GM12878 (cell line): ENCODE measurements at regions of chr13 and their contacts with region 1.

Region 1: DNA sequence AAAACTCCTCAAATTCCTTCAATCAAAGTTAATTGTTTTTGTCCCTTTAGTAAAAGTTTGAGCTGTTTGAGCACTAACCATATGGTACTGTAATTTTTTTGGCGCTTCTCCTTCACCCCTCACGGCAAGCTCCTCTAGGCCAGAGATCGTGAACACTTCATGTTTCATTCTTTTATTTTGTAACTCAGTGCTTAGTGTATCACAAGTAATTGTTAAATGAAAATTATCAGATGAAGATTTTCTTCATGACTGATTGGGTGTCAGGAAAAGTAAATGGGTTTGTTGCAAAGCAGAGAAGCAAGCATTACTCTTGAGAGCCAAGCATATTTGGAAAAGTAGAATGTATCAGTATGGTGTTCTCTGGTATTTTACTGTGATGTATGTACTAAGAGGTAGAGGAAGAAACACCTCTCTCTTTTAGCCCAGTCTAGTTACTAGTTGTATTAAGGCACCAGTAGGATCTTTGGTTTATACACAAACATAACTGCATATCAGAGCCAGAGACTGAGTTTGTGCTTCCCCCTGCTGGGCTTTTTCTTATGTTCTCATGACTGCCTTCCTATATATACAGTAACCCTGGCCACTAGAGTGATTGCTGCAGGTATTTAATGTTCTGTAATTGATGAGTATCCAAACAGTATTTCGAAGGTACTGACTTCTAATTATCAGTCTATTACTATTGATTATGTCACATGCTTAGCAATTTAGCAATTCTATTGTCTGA is 202.3 kb upstream of the KLHL1 start:
- DNase-seq: no peak
- ATAC-seq: peak; percentile 90
- H3K4me3 ChIP-seq: no peak overlapping the region
- H3K27ac ChIP-seq: no peak overlapping the region
- H3K4me1 ChIP-seq: no peaks in the 10 kb centered on the region
- H3K27me3 ChIP-seq: no peaks in the 10 kb centered on the region
- CTCF ChIP-seq: peak in 2 of 3 experiments; percentile 28 to 48; a peak in 3 of 6 replicates
- EP300 ChIP-seq: no peak
- POLR2A ChIP-seq: no peak
- RAD21 ChIP-seq: peak; percentile 50

Region 2: DNA sequence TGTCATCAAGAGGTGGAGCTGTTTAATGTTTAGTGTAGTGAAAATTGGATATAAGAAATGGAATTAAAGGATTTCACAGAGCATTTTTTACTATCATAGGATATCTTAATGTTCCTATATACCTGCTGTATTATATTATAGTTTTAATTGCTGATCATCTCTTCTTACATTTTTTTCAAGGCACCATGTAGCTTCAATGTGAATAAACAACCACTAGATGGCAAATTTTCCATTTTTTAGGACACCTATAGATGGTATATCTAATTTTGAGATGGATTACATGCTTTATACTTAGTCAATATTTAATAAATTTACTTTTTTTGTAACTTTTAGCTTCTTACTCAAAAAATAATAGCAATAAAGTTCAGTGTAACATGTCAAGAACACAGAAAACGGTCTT is 211.9 kb before region 1 on chr13:
- CTCF ChIA-PET with region 1: interaction called, 28 read pairs
- POLR2A ChIA-PET with region 1: no interaction called
- RAD21 ChIA-PET with region 1: interaction called, 9 read pairs
- SMC1A ChIA-PET with region 1: interaction called, 13 read pairs
- in situ Hi-C with region 1: no loop called
- intact Hi-C with region 1: loop called (anchors 5 kb)
- DNase-seq: no peak
- ATAC-seq: peak; percentile 47; the same call in 2 of the 3 replicates
- H3K4me3 ChIP-seq: no peak overlapping the region
- H3K27ac ChIP-seq: no peak overlapping the region
- H3K4me1 ChIP-seq: no peaks in the 10 kb centered on the region
- H3K27me3 ChIP-seq: no peaks in the 10 kb centered on the region
- CTCF ChIP-seq: peak in 2 of 3 experiments; percentile 13 to 16; a peak in 2 of 6 replicates
- EP300 ChIP-seq: no peak
- POLR2A ChIP-seq: no peak
- RAD21 ChIP-seq: 0 out of 2 replicates have a peak, but pooled peaks have one; percentile 17

Region 3: DNA sequence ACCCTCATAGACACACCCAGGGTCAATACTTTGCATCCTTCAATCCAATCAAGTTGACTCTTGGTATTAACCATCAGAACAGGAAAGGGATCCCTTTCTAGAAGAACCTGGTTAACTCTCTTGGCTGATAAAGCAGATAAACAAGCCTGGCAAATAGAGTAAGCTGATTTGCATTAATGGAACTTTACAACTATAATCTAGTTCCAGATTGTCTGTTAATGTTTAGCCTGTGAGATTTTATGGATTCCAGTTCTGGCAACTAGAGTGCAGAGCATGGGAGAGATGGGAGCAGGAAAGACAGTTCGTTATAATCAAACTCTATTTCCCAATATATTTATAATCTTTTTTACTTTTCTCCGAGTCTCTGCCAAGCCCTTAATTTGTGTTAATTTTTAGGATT is 70.3 kb after region 1 on chr13:
- CTCF ChIA-PET with region 1: no interaction called
- POLR2A ChIA-PET with region 1: no interaction called
- RAD21 ChIA-PET with region 1: no interaction called
- SMC1A ChIA-PET with region 1: no interaction called
- in situ Hi-C with region 1: no loop called
- intact Hi-C with region 1: no loop called
- DNase-seq: no peak
- ATAC-seq: no peak
- H3K4me3 ChIP-seq: no peak overlapping the region
- H3K27ac ChIP-seq: no peak overlapping the region
- H3K4me1 ChIP-seq: no peaks in the 10 kb centered on the region
- H3K27me3 ChIP-seq: no peaks in the 10 kb centered on the region
- CTCF ChIP-seq: no peak
- EP300 ChIP-seq: no peak
- POLR2A ChIP-seq: no peak
- RAD21 ChIP-seq: no peak

Region 4: DNA sequence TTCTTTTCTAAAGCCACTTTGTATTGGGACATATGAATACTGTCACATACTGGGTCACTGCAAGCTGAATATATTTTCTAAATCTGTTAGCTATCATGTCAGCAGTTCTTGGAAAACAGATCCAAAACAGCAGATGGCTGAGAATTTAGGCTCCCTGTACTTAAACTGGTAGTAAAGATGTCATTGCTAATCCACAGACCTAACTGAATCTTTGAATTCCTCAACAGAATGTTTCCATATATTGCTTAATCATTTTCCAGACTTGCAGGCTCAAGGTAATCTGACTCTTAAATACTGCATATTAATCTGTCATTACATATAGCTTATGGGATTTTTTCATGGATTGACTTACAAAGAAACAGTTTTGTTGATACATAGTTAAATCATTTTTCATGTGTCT is 436.7 kb after region 1 on chr13:
- CTCF ChIA-PET with region 1: no interaction called
- POLR2A ChIA-PET with region 1: no interaction called
- RAD21 ChIA-PET with region 1: no interaction called
- SMC1A ChIA-PET with region 1: no interaction called
- in situ Hi-C with region 1: no loop called
- intact Hi-C with region 1: no loop called
- DNase-seq: no peak
- ATAC-seq: no peak
- H3K4me3 ChIP-seq: no peak overlapping the region
- H3K27ac ChIP-seq: no peak overlapping the region
- H3K4me1 ChIP-seq: no peaks in the 10 kb centered on the region
- H3K27me3 ChIP-seq: no peaks in the 10 kb centered on the region
- CTCF ChIP-seq: no peak
- EP300 ChIP-seq: no peak
- POLR2A ChIP-seq: no peak
- RAD21 ChIP-seq: no peak